AG04450 (cell line): ENCODE measurements at regions of chr5 and their contacts with region 1.

Region 1: GRCh38 chr5:40904205-40904993 is 4.9 kb upstream of the C7 start:
- DNase-seq: peak; percentile 65
- H3K4me3 ChIP-seq: no peak overlapping the region
- H3K27ac ChIP-seq: no peak overlapping the region
- H3K27me3 ChIP-seq: no peaks in the 10 kb centered on the region
- CTCF ChIP-seq: peak; percentile 100

Region 2: GRCh38 chr5:40981420-40981819 is 77.0 kb after region 1 on chr5:
- CTCF ChIA-PET with region 1: interaction called, 12 read pairs
- POLR2A ChIA-PET with region 1: no interaction called
- DNase-seq: no peak
- H3K4me3 ChIP-seq: no peak overlapping the region
- H3K27ac ChIP-seq: no peak overlapping the region
- H3K27me3 ChIP-seq: no peaks in the 10 kb centered on the region
- CTCF ChIP-seq: no peak

Region 3: GRCh38 chr5:41193456-41194205 is 289.2 kb after region 1 on chr5:
- CTCF ChIA-PET with region 1: interaction called, 13 read pairs
- POLR2A ChIA-PET with region 1: no interaction called
- DNase-seq: no peak
- H3K4me3 ChIP-seq: no peak overlapping the region
- H3K27ac ChIP-seq: no peak overlapping the region
- H3K27me3 ChIP-seq: no peaks in the 10 kb centered on the region
- CTCF ChIP-seq: no peak

Region 4: GRCh38 chr5:41270423-41271251 is 366.2 kb after region 1 on chr5:
- CTCF ChIA-PET with region 1: interaction called, 16 read pairs
- POLR2A ChIA-PET with region 1: interaction called, 3 read pairs
- DNase-seq: peak; percentile 53
- H3K4me3 ChIP-seq: no peak overlapping the region
- H3K27ac ChIP-seq: no peak overlapping the region
- H3K27me3 ChIP-seq: no peaks in the 10 kb centered on the region
- CTCF ChIP-seq: peak; percentile 86

Region 5: GRCh38 chr5:41346609-41347008 is 442.2 kb after region 1 on chr5:
- CTCF ChIA-PET with region 1: interaction called, 69 read pairs
- POLR2A ChIA-PET with region 1: no interaction called
- DNase-seq: no peak
- H3K4me3 ChIP-seq: no peak overlapping the region
- H3K27ac ChIP-seq: no peak overlapping the region
- H3K27me3 ChIP-seq: no peaks in the 10 kb centered on the region
- CTCF ChIP-seq: peak; percentile 34

Region 6: GRCh38 chr5:41834506-41834905 is 930.1 kb after region 1 on chr5:
- CTCF ChIA-PET with region 1: interaction called, 10 read pairs
- POLR2A ChIA-PET with region 1: no interaction called
- DNase-seq: no peak
- H3K4me3 ChIP-seq: no peak overlapping the region
- H3K27ac ChIP-seq: no peak overlapping the region
- H3K27me3 ChIP-seq: no peaks in the 10 kb centered on the region
- CTCF ChIP-seq: no peak